Heart left ventricle (tissue), 16 donors: ENCODE measurements at regions of chr7 and their contacts with region 1.

Region 1: DNA sequence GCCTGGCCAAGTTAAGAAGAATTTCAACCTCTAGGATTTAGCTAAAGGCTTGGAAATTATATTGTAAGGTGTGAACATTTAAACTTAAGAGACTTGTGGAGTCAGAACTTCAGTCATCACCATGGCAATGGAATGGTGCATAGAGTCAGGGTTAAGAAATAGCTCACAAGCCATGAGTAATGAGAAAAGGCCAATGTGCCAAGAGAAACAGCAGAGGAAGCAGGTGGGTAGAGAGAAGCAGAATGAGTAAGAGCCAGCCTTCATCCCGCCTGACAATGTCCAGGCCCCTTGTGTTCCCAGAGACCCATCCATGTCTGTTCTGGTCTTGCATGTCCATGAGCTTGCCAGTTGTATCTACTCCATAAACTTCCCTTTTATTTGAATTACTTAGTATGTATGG is 62.6 kb upstream of the TBX20 start:
- DNase-seq: no peak
- ATAC-seq: peak in 3 of 4 donors; percentile 7 to 77 (median 34)
- H3K4me3 ChIP-seq: no peak overlapping the region
- H3K27ac ChIP-seq: no peak overlapping the region
- H3K4me1 ChIP-seq: peaks cover 0 to 4% (median 0%) of the 10 kb centered on the region in 12 donors
- H3K27me3 ChIP-seq: no peaks in the 10 kb centered on the region
- CTCF ChIP-seq: no peak
- POLR2A ChIP-seq: no peak

Region 2: DNA sequence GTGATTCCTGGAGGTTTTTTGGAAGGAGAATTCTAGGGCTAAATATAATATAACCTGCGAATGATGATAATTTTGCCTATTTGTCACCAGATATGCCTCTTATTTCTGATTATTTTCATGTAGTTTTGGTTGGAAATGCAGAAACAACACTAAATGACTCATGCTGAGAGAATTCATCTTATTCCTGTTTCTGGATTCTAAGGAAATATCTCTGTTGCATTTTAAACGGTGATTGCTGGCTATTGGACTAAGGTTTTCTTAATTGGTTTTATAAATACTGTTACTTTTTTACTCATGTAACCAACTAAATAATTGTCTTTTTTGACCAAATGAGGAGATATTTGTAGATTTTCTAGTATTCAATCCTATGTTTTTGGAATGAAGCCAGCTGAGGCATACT is 863.4 kb before region 1 on chr7:
- intact Hi-C with region 1: no loop called
- DNase-seq: no peak
- ATAC-seq: no peak
- H3K4me3 ChIP-seq: no peak overlapping the region
- H3K27ac ChIP-seq: no peak overlapping the region
- H3K4me1 ChIP-seq: no peaks in the 10 kb centered on the region
- H3K27me3 ChIP-seq: no peaks in the 10 kb centered on the region
- CTCF ChIP-seq: no peak
- POLR2A ChIP-seq: no peak

Region 3: DNA sequence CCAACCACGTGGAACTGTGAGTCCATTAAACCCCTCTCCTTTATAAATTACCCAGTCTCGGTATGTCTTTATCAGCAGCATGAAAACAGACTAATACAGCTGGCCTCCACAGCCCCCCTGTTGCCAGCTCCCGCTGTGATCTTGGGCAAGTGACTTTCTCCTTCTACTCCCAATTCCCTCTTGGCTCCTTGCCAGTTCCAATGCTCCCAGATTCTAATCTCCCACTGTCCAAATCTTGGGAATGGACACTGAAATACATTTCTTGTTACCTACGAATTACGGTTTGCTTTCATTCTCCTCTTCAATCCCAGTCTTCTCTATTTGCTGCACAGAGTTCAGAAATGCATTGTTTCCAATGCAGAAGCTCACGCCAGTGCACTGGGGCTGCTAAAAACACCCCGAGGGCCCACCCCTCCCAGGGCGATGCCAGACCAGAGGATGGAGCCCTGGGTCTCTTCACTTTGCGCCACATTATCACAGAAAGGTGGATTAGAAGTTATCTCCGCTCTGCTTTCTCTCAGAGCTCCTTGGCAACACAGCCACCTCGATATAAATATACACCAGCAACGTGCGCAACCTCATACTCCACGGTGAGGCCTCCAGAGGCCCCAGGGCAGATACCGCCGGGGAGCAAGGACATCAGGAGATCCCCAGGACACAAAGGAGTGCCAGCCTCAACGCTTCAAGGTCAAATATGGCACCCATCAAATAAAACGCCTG is 58.1 kb after region 1 on chr7:
- intact Hi-C with region 1: loop called in 1 of 10 experiments (anchors 5 kb)
- DNase-seq: peak; percentile 65 to 89 (median 75)
- ATAC-seq: peak; percentile 94 to 96 (median 95)
- H3K4me3 ChIP-seq: peak overlapping the region in 1 of 12 donors; percentile 1
- H3K27ac ChIP-seq: peak overlapping the region; percentile 49 to 92 (median 67)
- H3K4me1 ChIP-seq: peaks cover 0 to 25% (median 4%) of the 10 kb centered on the region in 12 donors
- H3K27me3 ChIP-seq: no peaks in the 10 kb centered on the region
- CTCF ChIP-seq: no peak
- POLR2A ChIP-seq: no peak